ENCODE measurements at regions of chr3 and their contacts with region 1.

Region 1: GRCh38 chr3:124032648-124033359 is 40.9 kb upstream of the ROPN1 start:
- DNase-seq: peak; percentile 97
- H3K4me3 ChIP-seq: peak overlapping the region; percentile 96 to 97
- H3K27ac ChIP-seq: peak overlapping the region; percentile 65 to 92
- H3K4me1 ChIP-seq: peaks cover 0 to 22% of the 10 kb centered on the region in 2 experiments; a peak in 3 of 4 replicates
- H3K27me3 ChIP-seq: no peaks in the 10 kb centered on the region
- CTCF ChIP-seq: peak; percentile 56
- EP300 ChIP-seq: peak; percentile 4 to 83; a peak in 1 of 4 replicates
- RAD21 ChIP-seq: peak; percentile 49

Region 2: GRCh38 chr3:124014366-124014942 is 18.4 kb before region 1 on chr3:
- CTCF ChIA-PET with region 1: interaction called, 11 read pairs
- POLR2A ChIA-PET with region 1: interaction called, 4 read pairs
- DNase-seq: no peak
- H3K4me3 ChIP-seq: no peak overlapping the region
- H3K27ac ChIP-seq: no peak overlapping the region
- H3K4me1 ChIP-seq: peaks cover 0 to 5% of the 10 kb centered on the region in 2 experiments; a peak in 1 of 4 replicates
- H3K27me3 ChIP-seq: no peaks in the 10 kb centered on the region
- CTCF ChIP-seq: no peak
- EP300 ChIP-seq: no peak
- RAD21 ChIP-seq: no peak

Region 3: DNA sequence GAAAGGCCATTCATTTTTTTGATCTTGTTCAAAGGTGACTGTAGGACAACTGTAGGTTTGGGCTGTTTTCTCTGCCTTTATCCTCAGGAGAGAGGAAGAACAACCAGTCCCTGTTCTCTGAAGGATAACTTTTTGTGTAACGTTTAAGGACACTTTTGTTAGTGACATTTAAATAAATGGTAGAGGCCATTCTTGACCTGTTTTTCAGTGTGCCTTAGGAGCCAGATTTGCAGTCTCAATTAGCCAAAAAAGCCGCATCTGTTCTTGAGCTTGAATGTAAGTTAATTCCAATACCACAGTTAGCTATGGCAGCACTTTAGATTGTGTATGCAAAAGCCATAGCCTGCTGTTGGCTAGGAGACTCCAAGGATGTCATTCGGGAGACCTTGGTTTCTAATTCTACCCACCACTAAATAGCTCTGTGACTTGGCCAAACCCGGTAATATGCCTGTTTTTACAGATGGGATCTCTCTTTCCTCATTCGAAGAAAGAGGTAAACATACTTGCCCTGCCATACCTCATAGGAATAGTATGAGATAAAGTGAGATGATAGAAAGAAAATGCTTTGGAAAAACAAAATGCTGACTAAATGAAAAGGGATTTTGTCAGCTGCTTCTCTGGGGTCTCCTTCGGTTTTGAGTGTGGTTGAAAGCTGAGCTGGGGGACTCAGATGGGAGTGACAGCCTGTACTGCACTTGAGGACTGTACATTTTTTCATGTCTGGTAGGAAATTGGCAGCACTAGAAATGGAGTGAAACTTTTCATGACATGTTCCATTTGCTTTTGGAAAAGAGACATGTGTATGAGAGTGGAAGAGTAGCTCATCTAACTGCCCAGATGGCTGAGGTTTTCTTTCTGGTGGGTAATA is 16.4 kb after region 1 on chr3:
- CTCF ChIA-PET with region 1: interaction called, 60 read pairs
- POLR2A ChIA-PET with region 1: no interaction called
- DNase-seq: no peak
- H3K4me3 ChIP-seq: no peak overlapping the region
- H3K27ac ChIP-seq: no peak overlapping the region
- H3K4me1 ChIP-seq: peaks cover 0 to 10% of the 10 kb centered on the region in 2 experiments; a peak in 1 of 4 replicates
- H3K27me3 ChIP-seq: no peaks in the 10 kb centered on the region
- CTCF ChIP-seq: no peak
- EP300 ChIP-seq: no peak
- RAD21 ChIP-seq: no peak

Region 4: DNA sequence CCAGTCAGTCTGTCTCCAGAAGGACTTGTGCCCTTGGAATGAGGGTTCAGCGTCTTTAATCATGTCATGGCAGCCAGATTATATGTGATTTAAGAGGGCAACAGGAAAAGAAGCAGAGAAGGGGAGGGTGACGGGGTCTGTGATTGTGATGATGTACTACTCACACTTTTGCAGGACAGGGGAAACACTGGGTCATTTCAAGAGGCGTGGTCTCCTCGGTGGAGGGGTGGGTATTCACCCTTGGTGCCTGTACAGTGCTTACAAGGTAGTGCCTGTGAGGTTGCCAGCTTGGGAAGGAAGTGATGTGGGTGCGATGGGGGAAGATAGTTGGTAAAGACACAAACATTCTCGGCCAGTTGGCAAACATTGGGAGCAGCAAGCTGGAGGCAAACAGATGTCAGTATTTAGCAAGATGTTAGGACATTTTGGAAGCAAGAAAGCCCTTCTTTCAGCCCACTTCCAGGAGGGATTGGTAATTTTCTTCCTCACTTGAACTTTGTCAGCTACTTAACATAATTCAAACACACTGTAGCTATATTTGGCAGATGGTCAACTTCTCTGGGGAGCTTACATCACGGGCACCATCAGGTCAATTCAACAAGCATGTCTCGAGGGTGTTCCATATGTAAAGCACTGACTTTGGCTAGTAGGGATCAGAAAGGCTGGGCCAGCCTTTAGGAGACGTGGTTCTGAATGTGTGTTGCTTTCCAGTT is 30.5 kb after region 1 on chr3:
- CTCF ChIA-PET with region 1: interaction called, 60 read pairs
- POLR2A ChIA-PET with region 1: interaction called, 14 read pairs
- DNase-seq: peak; percentile 30
- H3K4me3 ChIP-seq: no peak overlapping the region
- H3K27ac ChIP-seq: peak overlapping the region in 1 of 2 experiments; percentile 96; a peak in 2 of 4 replicates
- H3K4me1 ChIP-seq: peaks cover 8 to 65% of the 10 kb centered on the region in 2 experiments; a peak in 3 of 4 replicates
- H3K27me3 ChIP-seq: no peaks in the 10 kb centered on the region
- CTCF ChIP-seq: no peak
- EP300 ChIP-seq: no peak
- RAD21 ChIP-seq: no peak

Region 5: GRCh38 chr3:124078953-124079911 is 46.4 kb after region 1 on chr3:
- CTCF ChIA-PET with region 1: interaction called, 55 read pairs
- POLR2A ChIA-PET with region 1: interaction called, 10 read pairs
- DNase-seq: peak; percentile 45
- H3K4me3 ChIP-seq: no peak overlapping the region
- H3K27ac ChIP-seq: peak overlapping the region in 1 of 2 experiments; percentile 34; a peak in 1 of 4 replicates
- H3K4me1 ChIP-seq: peaks cover 0 to 34% of the 10 kb centered on the region in 2 experiments; a peak in 3 of 4 replicates
- H3K27me3 ChIP-seq: no peaks in the 10 kb centered on the region
- CTCF ChIP-seq: peak; percentile 89
- EP300 ChIP-seq: no peak
- RAD21 ChIP-seq: peak; percentile 85

Region 6: GRCh38 chr3:124318014-124318413 is 285.2 kb after region 1 on chr3:
- CTCF ChIA-PET with region 1: interaction called, 3 read pairs
- POLR2A ChIA-PET with region 1: interaction called, 10 read pairs
- DNase-seq: peak; percentile 69
- H3K4me3 ChIP-seq: no peak overlapping the region
- H3K27ac ChIP-seq: peak overlapping the region in 1 of 2 experiments; percentile 99; a peak in 2 of 4 replicates
- H3K4me1 ChIP-seq: peaks cover 0 to 45% of the 10 kb centered on the region in 2 experiments; a peak in 3 of 4 replicates
- H3K27me3 ChIP-seq: no peaks in the 10 kb centered on the region
- CTCF ChIP-seq: no peak
- EP300 ChIP-seq: peak; percentile 19 to 90; a peak in 2 of 4 replicates
- RAD21 ChIP-seq: no peak; the same call in 1 of the 2 replicates

Region 7: GRCh38 chr3:124552239-124552638 is 519.4 kb after region 1 on chr3:
- CTCF ChIA-PET with region 1: no interaction called
- POLR2A ChIA-PET with region 1: no interaction called
- DNase-seq: no peak
- H3K4me3 ChIP-seq: no peak overlapping the region
- H3K27ac ChIP-seq: peak overlapping the region in 1 of 2 experiments; percentile 29; a peak in 1 of 4 replicates
- H3K4me1 ChIP-seq: peaks cover 4 to 27% of the 10 kb centered on the region in 2 experiments; a peak in 3 of 4 replicates
- H3K27me3 ChIP-seq: no peaks in the 10 kb centered on the region
- CTCF ChIP-seq: no peak
- EP300 ChIP-seq: no peak
- RAD21 ChIP-seq: no peak

Measured in SK-N-SH (cell line).